Mammary epithelial cell (primary cell): ENCODE measurements at regions of chr12 and their contacts with region 1.

Region 1: GRCh38 chr12:63978519-63978918 is 134.0 kb downstream of the SRGAP1 start:
- DNase-seq: peak; percentile 87
- H3K4me3 ChIP-seq: no peak overlapping the region
- H3K27ac ChIP-seq: peak overlapping the region; percentile 15
- H3K4me1 ChIP-seq: peaks cover 11% of the 10 kb centered on the region
- H3K27me3 ChIP-seq: no peaks in the 10 kb centered on the region
- CTCF ChIP-seq: no peak

Region 2: GRCh38 chr12:63917864-63918799 is 60.4 kb before region 1 on chr12:
- CTCF ChIA-PET with region 1: no interaction called
- dilution Hi-C with region 1: no loop called
- in situ Hi-C with region 1: no loop called
- intact Hi-C with region 1: loop called (anchors 1 kb)
- DNase-seq: peak; percentile 95
- H3K4me3 ChIP-seq: no peak overlapping the region
- H3K27ac ChIP-seq: peak overlapping the region; percentile 98
- H3K4me1 ChIP-seq: peaks cover 76% of the 10 kb centered on the region
- H3K27me3 ChIP-seq: no peaks in the 10 kb centered on the region
- CTCF ChIP-seq: no peak

Region 3: GRCh38 chr12:63930971-63931370 is 47.5 kb before region 1 on chr12:
- CTCF ChIA-PET with region 1: no interaction called
- dilution Hi-C with region 1: no loop called
- in situ Hi-C with region 1: no loop called
- intact Hi-C with region 1: loop called (anchors 5 kb)
- DNase-seq: peak; percentile 65
- H3K4me3 ChIP-seq: no peak overlapping the region
- H3K27ac ChIP-seq: peak overlapping the region; percentile 57
- H3K4me1 ChIP-seq: peaks cover 18% of the 10 kb centered on the region
- H3K27me3 ChIP-seq: no peaks in the 10 kb centered on the region
- CTCF ChIP-seq: no peak

Region 4: DNA sequence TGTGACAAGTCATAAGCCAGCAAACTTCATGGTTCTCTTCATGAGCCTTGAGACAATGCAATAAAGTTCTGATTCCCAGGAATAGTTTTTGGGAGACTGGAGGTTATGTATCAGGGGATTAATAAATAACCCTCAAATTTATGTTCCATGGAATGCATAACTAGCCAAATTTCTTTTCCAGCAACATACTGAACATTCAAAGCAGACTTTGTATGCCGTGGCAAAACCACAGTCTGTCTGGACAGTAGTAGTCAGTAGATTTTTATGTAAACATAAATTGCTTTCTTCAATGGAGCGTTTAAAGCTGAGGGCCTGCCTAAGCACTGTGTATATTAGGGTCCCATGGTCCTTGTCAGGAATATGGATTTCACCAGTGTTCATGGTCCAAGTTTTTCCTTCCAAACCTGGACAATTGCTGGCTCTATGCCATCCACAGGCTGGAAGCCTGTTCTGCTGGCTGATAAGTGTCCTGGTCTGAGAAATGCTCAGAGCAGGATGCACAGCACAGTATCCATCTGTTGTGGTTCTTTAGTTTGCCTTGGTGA is 10.9 kb after region 1 on chr12:
- CTCF ChIA-PET with region 1: no interaction called
- dilution Hi-C with region 1: no loop called
- in situ Hi-C with region 1: no loop called
- intact Hi-C with region 1: loop called (anchors 1 kb)
- DNase-seq: no peak
- H3K4me3 ChIP-seq: no peak overlapping the region
- H3K27ac ChIP-seq: no peak overlapping the region
- H3K4me1 ChIP-seq: peaks cover 41% of the 10 kb centered on the region
- H3K27me3 ChIP-seq: no peaks in the 10 kb centered on the region
- CTCF ChIP-seq: no peak

Region 5: GRCh38 chr12:64004641-64005040 is 26.1 kb after region 1 on chr12:
- CTCF ChIA-PET with region 1: no interaction called
- dilution Hi-C with region 1: no loop called
- in situ Hi-C with region 1: no loop called
- intact Hi-C with region 1: loop called (anchors 2 kb)
- DNase-seq: no peak
- H3K4me3 ChIP-seq: no peak overlapping the region
- H3K27ac ChIP-seq: no peak overlapping the region
- H3K4me1 ChIP-seq: no peaks in the 10 kb centered on the region
- H3K27me3 ChIP-seq: no peaks in the 10 kb centered on the region
- CTCF ChIP-seq: no peak

Region 6: GRCh38 chr12:64025174-64025963 is 46.9 kb after region 1 on chr12:
- CTCF ChIA-PET with region 1: no interaction called
- dilution Hi-C with region 1: no loop called
- in situ Hi-C with region 1: no loop called
- intact Hi-C with region 1: no loop called
- DNase-seq: peak; percentile 28
- H3K4me3 ChIP-seq: no peak overlapping the region
- H3K27ac ChIP-seq: no peak overlapping the region
- H3K4me1 ChIP-seq: no peaks in the 10 kb centered on the region
- H3K27me3 ChIP-seq: no peaks in the 10 kb centered on the region
- CTCF ChIP-seq: no peak

Region 7: GRCh38 chr12:64088431-64089349 is 110.2 kb after region 1 on chr12:
- CTCF ChIA-PET with region 1: no interaction called
- dilution Hi-C with region 1: no loop called
- in situ Hi-C with region 1: no loop called
- intact Hi-C with region 1: no loop called
- DNase-seq: peak; percentile 93
- H3K4me3 ChIP-seq: peak overlapping the region in 2 of 3 experiments; percentile 2 to 19
- H3K27ac ChIP-seq: peak overlapping the region; percentile 79
- H3K4me1 ChIP-seq: peaks cover 30% of the 10 kb centered on the region
- H3K27me3 ChIP-seq: no peaks in the 10 kb centered on the region
- CTCF ChIP-seq: no peak

Region 8: DNA sequence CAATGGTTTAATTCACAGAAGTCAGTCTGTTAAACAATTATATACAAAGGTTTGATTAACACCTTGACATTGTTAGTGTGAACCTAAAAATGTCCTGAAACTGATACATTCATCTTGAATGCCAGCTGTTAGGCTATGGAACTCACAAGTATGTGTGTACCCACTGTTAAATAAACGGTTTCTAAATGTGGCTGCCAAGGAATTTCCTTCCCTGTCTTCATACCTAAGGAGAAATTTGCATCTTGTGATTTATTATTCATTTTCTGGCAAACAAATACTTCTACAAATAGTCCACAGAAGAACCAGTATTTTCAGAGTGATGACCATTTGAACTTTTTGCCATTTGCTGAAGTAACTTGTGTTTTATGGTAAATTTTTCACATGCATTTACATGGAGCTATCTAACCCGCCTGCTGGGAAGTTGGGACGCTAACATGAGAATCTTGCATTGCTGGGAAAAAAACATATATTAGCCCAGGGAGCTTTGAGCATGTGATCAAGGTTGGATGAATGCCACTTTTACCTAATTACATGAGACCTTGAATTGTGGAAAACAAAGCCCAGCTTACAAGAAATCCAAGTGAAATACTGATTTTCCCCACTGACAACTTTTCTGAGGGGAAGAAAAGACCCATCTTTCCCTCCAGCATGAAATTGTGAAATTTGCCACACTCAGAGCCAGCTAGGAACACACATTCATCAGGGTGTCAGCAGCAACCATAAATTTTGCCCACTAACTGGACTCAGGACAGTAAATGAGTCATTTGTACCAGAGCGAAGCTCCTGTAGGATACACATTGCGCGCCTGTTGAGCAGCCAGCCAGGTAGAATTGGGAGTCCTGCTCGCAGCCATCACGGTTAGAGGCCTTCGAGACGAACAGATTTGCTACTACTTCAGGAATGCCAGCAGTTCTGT is 125.6 kb after region 1 on chr12:
- CTCF ChIA-PET with region 1: no interaction called
- dilution Hi-C with region 1: no loop called
- in situ Hi-C with region 1: no loop called
- intact Hi-C with region 1: loop called (anchors 5 kb)
- DNase-seq: peak; percentile 93
- H3K4me3 ChIP-seq: no peak overlapping the region
- H3K27ac ChIP-seq: peak overlapping the region; percentile 73
- H3K4me1 ChIP-seq: peaks cover 56% of the 10 kb centered on the region
- H3K27me3 ChIP-seq: no peaks in the 10 kb centered on the region
- CTCF ChIP-seq: no peak

Region 9: DNA sequence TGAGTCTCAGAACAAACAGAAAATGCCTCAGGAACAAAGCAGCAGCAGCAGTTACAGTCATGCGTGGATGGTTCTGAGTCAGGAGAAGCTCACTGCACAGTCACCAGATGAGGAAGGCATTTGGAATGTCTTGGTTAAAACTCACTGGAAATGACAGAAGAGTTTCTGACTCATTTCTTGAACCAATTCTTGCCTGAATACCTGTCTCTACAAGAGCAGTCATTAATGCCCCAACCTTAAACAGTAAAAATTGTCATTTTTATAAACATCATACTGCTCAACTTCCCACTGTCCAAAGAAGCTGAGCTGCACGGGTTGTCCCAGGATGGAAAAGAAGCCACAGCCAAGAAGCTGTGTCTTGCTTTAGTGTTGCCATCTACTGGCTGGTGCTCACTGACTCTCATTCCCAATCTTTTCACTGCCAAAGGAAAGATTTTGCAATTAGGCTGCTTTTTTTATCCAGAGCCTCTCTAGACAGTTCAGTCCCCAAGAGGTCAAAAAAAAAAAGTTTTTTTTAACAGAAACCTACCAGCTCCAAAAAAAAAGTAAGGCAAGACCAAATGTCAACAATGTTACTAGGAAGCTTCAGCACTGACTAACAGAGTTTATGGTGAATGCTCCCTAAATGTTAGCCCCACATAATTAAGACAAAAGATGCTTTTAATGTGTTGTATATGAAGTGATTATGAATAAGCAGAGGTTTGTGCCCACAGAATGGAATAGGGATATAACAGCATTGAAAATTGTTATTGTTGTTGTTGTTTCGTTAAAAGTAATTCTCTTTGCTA is 203.2 kb after region 1 on chr12:
- CTCF ChIA-PET with region 1: no interaction called
- dilution Hi-C with region 1: no loop called
- in situ Hi-C with region 1: no loop called
- intact Hi-C with region 1: loop called (anchors 5 kb)
- DNase-seq: peak; percentile 98
- H3K4me3 ChIP-seq: no peak overlapping the region
- H3K27ac ChIP-seq: peak overlapping the region; percentile 83
- H3K4me1 ChIP-seq: peaks cover 41% of the 10 kb centered on the region
- H3K27me3 ChIP-seq: no peaks in the 10 kb centered on the region
- CTCF ChIP-seq: peak; percentile 59 to 69